Activated B cell treated with CpG ODN at 0.5 μM for 24 hours (primary cell): ENCODE measurements at regions of chr16 and their contacts with region 1.

Region 1: GRCh38 chr16:3530371-3530914 is 29.6 kb downstream of the CLUAP1 start:
- DNase-seq: no peak
- ATAC-seq: no peak
- H3K4me3 Mint-ChIP-seq: no peak overlapping the region
- H3K27ac Mint-ChIP-seq: no peak overlapping the region
- H3K4me1 Mint-ChIP-seq: peaks cover 21% of the 10 kb centered on the region
- H3K27me3 Mint-ChIP-seq: no peaks in the 10 kb centered on the region
- CTCF ChIP-seq: no peak

Region 2: DNA sequence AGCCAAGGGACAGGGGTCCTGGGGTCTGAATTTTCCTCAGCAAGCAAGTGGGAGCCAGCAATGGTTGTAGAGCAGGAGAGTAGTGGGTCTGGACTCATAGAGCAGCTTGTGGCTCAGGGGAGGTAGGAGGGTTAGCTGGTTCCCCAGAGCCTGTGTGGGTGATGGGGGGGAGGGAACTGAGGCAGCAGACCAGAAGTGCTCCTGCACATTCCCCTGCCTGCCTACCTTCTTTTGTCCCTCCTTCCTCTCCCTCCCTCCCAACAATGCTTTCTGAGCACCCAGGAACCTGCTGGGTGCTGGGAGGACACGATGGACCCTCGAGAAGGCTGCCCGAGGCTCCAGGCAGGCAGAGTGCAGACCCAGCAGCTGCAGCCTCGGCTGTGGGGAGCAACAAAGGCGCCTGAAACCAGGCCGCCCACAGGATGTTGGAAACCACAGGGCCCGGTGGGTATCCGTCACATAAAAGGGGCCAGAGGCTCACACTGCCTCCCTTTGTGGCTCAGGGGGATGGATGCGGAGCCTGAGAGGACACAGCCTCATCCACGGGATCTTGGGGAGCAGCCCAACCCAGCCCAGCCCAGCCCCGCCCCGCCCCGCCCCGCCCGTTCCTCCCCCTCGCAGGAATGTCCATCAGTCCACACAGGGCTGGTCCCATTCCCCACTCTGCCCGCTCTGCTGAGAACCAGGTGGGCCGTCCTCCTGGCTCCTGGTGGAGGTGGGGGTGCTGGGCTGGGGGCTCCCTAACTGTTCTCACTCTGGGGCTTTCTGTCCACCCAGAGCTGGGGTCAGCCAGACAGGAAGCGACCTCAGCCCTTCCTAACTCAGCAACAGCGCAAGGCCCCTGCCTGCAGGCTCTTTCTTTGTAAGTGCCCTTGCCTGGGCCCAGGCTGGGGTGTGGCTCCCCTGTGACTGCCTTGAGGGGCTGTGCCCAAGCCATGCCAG is 48.4 kb after region 1 on chr16:
- CTCF ChIA-PET with region 1: no interaction called
- POLR2A ChIA-PET with region 1: no interaction called
- intact Hi-C with region 1: loop called (anchors 2 kb)
- DNase-seq: no peak
- ATAC-seq: peak; percentile 62
- H3K4me3 Mint-ChIP-seq: peak overlapping the region; percentile 78
- H3K27ac Mint-ChIP-seq: peak overlapping the region; percentile 92
- H3K4me1 Mint-ChIP-seq: peaks cover 55% of the 10 kb centered on the region
- H3K27me3 Mint-ChIP-seq: no peaks in the 10 kb centered on the region
- CTCF ChIP-seq: no peak

Region 3: GRCh38 chr16:3587547-3588110 is 57.2 kb after region 1 on chr16:
- CTCF ChIA-PET with region 1: no interaction called
- POLR2A ChIA-PET with region 1: no interaction called
- intact Hi-C with region 1: loop called (anchors 1 kb)
- DNase-seq: no peak
- ATAC-seq: peak; percentile 90
- H3K4me3 Mint-ChIP-seq: no peak overlapping the region
- H3K27ac Mint-ChIP-seq: no peak overlapping the region
- H3K4me1 Mint-ChIP-seq: peaks cover 22% of the 10 kb centered on the region
- H3K27me3 Mint-ChIP-seq: no peaks in the 10 kb centered on the region
- CTCF ChIP-seq: no peak

Region 4: GRCh38 chr16:3654249-3654991 is 124.0 kb after region 1 on chr16 and contains the start of gene DNASE1:
- CTCF ChIA-PET with region 1: no interaction called
- POLR2A ChIA-PET with region 1: no interaction called
- intact Hi-C with region 1: loop called (anchors 1 kb)
- DNase-seq: peak; percentile 40
- ATAC-seq: peak; percentile 87
- H3K4me3 Mint-ChIP-seq: no peak within 1 kb of the TSS
- H3K27ac Mint-ChIP-seq: peak within 1 kb of the TSS; percentile 50
- H3K4me1 Mint-ChIP-seq: peaks cover 2% of the 10 kb centered on the region
- H3K27me3 Mint-ChIP-seq: no peaks in the 10 kb centered on the region
- CTCF ChIP-seq: no peak
- total RNA-seq, gene DNASE1: 25.6 and 28.5 TPM in 2 replicates

Region 5: DNA sequence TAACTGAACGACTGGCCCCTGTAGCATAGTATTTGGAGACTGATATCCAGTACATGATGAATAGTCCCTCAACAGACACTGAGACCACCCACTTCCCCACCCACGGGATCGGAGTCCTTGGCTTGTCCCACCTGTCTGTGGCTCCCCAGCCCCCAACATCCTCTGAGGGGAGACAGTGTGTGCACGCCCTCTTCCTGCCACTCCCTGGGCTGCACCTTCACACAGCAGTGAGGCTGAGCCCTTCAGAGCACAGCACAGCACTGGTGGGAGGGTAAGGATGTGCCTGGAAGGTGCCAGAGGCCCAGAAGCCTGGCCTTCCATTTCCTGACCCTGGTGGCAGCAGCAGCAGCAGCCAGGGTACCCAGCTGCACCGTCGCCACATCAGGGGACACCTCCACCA is 135.1 kb after region 1 on chr16:
- CTCF ChIA-PET with region 1: no interaction called
- POLR2A ChIA-PET with region 1: no interaction called
- intact Hi-C with region 1: loop called (anchors 1 kb)
- DNase-seq: no peak
- ATAC-seq: no peak
- H3K4me3 Mint-ChIP-seq: no peak overlapping the region
- H3K27ac Mint-ChIP-seq: no peak overlapping the region
- H3K4me1 Mint-ChIP-seq: no peaks in the 10 kb centered on the region
- H3K27me3 Mint-ChIP-seq: no peaks in the 10 kb centered on the region
- CTCF ChIP-seq: no peak